Psoas muscle (tissue), 8 donors: ENCODE measurements at regions of chr2 and their contacts with region 1.

Region 1: DNA sequence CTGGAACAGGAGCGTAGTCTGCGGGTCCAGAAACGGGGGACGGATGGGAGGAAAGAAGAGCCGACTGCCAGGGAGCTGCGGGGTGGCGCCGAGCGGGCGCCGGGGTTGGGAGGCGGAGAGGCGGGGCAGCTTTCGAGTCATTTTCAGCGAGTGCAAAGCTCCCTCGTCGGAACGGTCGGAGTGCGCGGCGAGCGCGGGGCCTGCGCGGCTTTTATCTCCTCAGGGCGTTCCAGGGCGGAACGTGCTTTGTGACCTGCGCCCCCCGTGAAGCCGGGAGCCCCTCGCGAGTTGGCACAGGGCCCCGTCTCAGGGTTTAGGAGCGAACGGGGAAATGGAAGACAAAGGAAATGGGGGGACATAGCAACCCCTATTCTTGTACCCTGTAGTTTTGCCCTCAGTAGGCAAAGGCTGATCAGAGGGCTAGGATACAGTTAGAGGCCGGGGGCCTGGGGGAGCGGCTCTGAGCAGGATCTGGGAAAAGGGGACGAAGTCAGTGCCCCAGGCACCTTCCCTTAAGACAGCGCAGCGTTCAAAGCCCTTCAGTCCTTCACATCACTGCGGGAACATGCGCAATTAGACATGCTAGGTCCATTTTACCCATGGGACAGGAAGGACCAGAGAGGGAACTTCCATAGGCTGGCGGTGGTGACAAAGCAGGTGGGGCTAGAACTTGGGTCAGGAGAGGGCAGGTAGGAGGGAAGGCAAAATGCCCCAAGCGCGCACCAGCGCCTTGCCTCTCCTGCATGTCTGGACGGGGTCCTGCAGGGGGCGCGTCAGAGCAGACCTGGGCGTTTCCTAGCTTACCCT is 60.1 kb upstream of the IL1RL1 start:
- DNase-seq: peak; percentile 70 to 80
- ATAC-seq: peak; percentile 73 to 87 (median 77)
- H3K4me3 ChIP-seq: peak overlapping the region; percentile 55
- H3K27ac ChIP-seq: no peak overlapping the region
- H3K4me1 ChIP-seq: no peaks in the 10 kb centered on the region
- H3K27me3 ChIP-seq: no peaks in the 10 kb centered on the region
- CTCF ChIP-seq: peak; percentile 62

Region 2: GRCh38 chr2:101463891-101464641 is 787.2 kb before region 1 on chr2:
- intact Hi-C with region 1: no loop called
- DNase-seq: no peak
- ATAC-seq: peak in 2 of 4 donors; percentile 39 to 40
- H3K4me3 ChIP-seq: no peak overlapping the region
- H3K27ac ChIP-seq: peak overlapping the region; percentile 9
- H3K4me1 ChIP-seq: no peaks in the 10 kb centered on the region
- H3K27me3 ChIP-seq: no peaks in the 10 kb centered on the region
- CTCF ChIP-seq: no peak

Region 3: DNA sequence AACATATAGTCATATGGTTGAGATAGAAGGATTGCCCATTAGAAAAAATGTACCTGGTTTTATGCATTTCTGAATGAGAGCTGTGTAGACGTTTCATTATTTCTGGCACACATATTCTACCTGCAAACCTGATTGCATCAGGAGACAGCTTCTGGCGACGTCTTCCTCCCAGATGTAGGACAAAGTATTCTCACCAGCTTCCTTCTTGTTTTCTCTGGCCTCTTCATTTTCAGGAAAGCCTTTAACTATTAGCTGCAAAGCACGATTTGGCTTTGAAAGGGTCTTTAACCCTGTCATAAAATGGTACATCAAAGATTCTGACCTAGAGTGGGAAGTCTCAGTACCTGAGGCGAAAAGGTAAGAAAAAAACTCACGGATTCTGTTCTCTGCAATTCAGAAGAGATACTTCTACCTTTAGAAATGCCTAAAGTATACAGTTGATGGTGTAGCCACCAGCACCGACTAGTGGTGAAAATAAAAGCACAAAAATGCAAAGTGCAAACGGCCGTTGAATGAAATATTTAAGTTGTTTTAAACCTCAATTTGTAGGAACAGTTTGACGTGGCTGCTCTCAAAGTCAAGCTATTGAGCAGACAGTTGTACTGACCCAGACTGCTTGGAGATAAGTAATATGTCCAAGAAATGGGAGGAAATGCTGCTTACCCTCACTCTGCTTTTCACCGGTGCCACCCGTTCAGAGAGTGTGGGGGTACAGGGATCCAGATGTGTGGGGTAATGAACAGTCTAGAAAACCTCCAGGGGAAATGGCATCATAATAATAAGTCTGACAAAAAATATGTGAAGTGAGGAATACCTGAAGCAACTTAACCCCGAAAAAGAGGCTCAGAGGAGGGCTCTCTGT is 192.0 kb after region 1 on chr2:
- intact Hi-C with region 1: loop called (anchors 5 kb)
- DNase-seq: no peak
- ATAC-seq: no peak
- H3K4me3 ChIP-seq: no peak overlapping the region
- H3K27ac ChIP-seq: no peak overlapping the region
- H3K4me1 ChIP-seq: no peaks in the 10 kb centered on the region
- H3K27me3 ChIP-seq: peaks cover 0 to 2% (median 0%) of the 10 kb centered on the region in 3 donors
- CTCF ChIP-seq: peak; percentile 49

Region 4: GRCh38 chr2:102449370-102449974 is 198.2 kb after region 1 on chr2:
- intact Hi-C with region 1: loop called (anchors 5 kb)
- DNase-seq: peak in 1 of 2 donors; percentile 19
- ATAC-seq: no peak
- H3K4me3 ChIP-seq: no peak overlapping the region
- H3K27ac ChIP-seq: no peak overlapping the region
- H3K4me1 ChIP-seq: no peaks in the 10 kb centered on the region
- H3K27me3 ChIP-seq: peaks cover 0 to 2% (median 0%) of the 10 kb centered on the region in 3 donors
- CTCF ChIP-seq: peak; percentile 49